Transverse colon (tissue), 4 donors: ENCODE measurements at regions of chr2 and their contacts with region 1.

Region 1: GRCh38 chr2:9984217-9984739 is 32.8 kb downstream of the GRHL1 start:
- DNase-seq: no peak
- H3K4me3 ChIP-seq: no peak overlapping the region
- H3K27ac ChIP-seq: peak overlapping the region; percentile 47 to 70 (median 56)
- H3K4me1 ChIP-seq: peaks cover 9 to 20% (median 13%) of the 10 kb centered on the region in 4 donors
- H3K27me3 ChIP-seq: no peaks in the 10 kb centered on the region
- CTCF ChIP-seq: peak; percentile 76 to 89 (median 86)
- EP300 ChIP-seq: no peak
- POLR2A ChIP-seq: no peak

Region 2: GRCh38 chr2:9897331-9897737 is 86.9 kb before region 1 on chr2:
- in situ Hi-C with region 1: no loop called
- intact Hi-C with region 1: no loop called
- DNase-seq: peak; percentile 51
- H3K4me3 ChIP-seq: no peak overlapping the region
- H3K27ac ChIP-seq: peak overlapping the region in 3 of 4 donors; percentile 26 to 44 (median 35)
- H3K4me1 ChIP-seq: peaks cover 0 to 29% (median 7%) of the 10 kb centered on the region in 4 donors
- H3K27me3 ChIP-seq: no peaks in the 10 kb centered on the region
- CTCF ChIP-seq: no peak
- EP300 ChIP-seq: no peak
- POLR2A ChIP-seq: no peak

Region 3: GRCh38 chr2:10036095-10036884 is 52.0 kb after region 1 on chr2:
- in situ Hi-C with region 1: no loop called
- intact Hi-C with region 1: no loop called
- DNase-seq: peak; percentile 64
- H3K4me3 ChIP-seq: no peak overlapping the region
- H3K27ac ChIP-seq: peak overlapping the region; percentile 18 to 91 (median 61)
- H3K4me1 ChIP-seq: peaks cover 13 to 42% (median 26%) of the 10 kb centered on the region in 4 donors
- H3K27me3 ChIP-seq: no peaks in the 10 kb centered on the region
- CTCF ChIP-seq: peak; percentile 31 to 48 (median 43)
- EP300 ChIP-seq: no peak
- POLR2A ChIP-seq: no peak

Region 4: DNA sequence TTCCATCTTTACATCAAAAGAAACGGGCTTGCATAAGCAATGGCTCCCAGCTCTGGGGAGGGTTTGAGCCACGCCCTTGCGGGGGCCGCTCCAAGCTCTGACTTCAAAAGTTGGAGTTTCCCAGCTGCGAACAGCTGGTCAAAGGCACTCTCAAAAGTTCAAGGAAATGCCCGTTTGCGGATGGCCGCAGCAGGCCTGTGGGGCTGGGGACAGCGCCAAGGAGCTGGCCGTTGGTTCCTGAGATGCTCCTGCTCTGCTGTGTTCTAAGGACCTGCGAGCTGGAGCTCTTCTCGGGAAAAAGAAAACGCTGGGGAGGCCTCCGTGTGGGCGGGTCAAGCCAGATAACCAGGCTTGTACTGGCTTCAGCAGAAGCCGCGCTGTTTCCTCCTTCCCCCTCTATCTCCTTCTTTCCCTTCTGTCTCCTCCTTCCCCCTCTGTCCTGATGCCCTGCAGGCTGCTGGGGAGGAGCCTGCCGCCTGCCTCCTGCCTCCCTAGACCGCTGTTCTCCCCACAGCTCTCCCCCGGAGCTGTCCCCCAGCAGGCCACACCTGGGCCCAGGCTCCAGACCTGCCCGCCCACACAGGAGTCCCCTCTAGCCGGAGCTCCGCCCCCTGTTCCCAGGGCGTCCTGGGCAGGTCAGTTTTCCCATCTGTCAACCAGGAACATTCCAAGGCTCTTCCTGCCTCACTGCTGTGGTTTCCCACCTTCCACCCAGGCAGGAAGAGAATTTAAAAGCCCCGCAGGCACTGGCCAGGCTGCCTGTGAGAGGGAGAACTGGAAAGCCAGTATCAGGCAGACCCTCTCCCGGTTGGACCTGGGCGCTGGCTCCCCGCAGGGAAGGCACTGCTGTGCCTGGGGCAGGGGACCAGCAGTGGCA is 73.2 kb after region 1 on chr2:
- in situ Hi-C with region 1: no loop called
- intact Hi-C with region 1: loop called (anchors 5 kb)
- DNase-seq: peak; percentile 58
- H3K4me3 ChIP-seq: peak overlapping the region in 3 of 4 donors; percentile 11 to 30 (median 19)
- H3K27ac ChIP-seq: peak overlapping the region; percentile 63 to 73 (median 68)
- H3K4me1 ChIP-seq: peaks cover 13 to 20% (median 15%) of the 10 kb centered on the region in 4 donors
- H3K27me3 ChIP-seq: no peaks in the 10 kb centered on the region
- CTCF ChIP-seq: no peak
- EP300 ChIP-seq: no peak
- POLR2A ChIP-seq: no peak